ENCODE measurements at regions of chr14 and their contacts with region 1.

Region 1: GRCh38 chr14:20697273-20698017 is 8.9 kb downstream of the ANG start:
- DNase-seq: peak; percentile 67 to 79
- ATAC-seq: peak; percentile 95 to 96
- H3K4me3 ChIP-seq: no peak overlapping the region
- H3K27ac ChIP-seq: no peak overlapping the region
- H3K4me1 ChIP-seq: 0 out of 3 replicates have a peak, but pooled peaks cover 3% of the 10 kb centered on the region
- CTCF ChIP-seq: peak; percentile 83
- EP300 ChIP-seq: no peak
- POLR2A ChIP-seq: no peak
- RAD21 ChIP-seq: peak; percentile 88 to 93

Region 2: DNA sequence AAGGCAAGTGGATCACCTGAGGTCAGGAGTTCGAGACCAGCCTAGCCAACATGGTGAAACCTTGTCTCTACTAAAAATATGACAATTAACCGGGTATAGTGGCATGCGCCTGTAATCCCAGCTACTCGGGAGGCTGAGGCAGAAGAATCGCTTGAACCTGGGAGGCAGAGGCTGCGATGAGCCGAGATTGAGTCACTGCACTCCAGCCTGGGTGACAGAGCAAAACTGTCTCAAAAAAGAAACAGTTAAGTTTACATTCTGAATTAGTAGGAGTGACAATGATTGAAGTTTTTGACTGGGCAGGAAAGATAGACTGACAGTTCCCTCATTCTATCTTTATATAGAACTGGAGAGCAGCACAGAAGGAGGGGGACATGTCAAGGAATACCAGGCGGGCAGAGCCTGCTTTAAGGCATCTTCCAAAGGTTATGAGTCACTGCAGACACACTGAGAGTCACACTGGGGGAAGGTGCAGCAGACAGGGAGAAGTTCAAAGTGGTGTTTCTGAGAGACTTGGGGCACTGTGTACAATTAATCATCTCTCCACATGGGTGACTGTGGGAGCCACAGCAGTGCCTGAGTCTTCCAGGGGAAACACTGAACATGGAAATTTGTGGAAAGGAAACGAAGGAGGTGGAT is 151.0 kb after region 1 on chr14:
- CTCF ChIA-PET with region 1: interaction called, 81 read pairs
- POLR2A ChIA-PET with region 1: interaction called, 3 read pairs
- DNase-seq: peak; percentile 84 to 94
- ATAC-seq: peak; percentile 97 to 99
- H3K4me3 ChIP-seq: peak overlapping the region; percentile 31; the same call in 2 of the 3 replicates
- H3K27ac ChIP-seq: peak overlapping the region; percentile 94 to 96
- H3K4me1 ChIP-seq: peaks cover 40% of the 10 kb centered on the region
- CTCF ChIP-seq: no peak
- EP300 ChIP-seq: peak; percentile 33 to 39; a peak in 1 of 5 replicates
- POLR2A ChIP-seq: no peak
- RAD21 ChIP-seq: 0 out of 5 replicates have a peak, but pooled peaks of 1 of the 2 experiments have one; percentile 7

Region 3: GRCh38 chr14:20873370-20874177 is 176.1 kb after region 1 on chr14:
- CTCF ChIA-PET with region 1: interaction called, 36 read pairs
- POLR2A ChIA-PET with region 1: no interaction called
- DNase-seq: peak; percentile 33 to 87
- ATAC-seq: peak; percentile 96 to 99
- H3K4me3 ChIP-seq: no peak overlapping the region
- H3K27ac ChIP-seq: 0 out of 6 replicates have a peak overlapping the region, but pooled peaks of 1 of the 2 experiments have one; percentile 25
- H3K4me1 ChIP-seq: no peaks in the 10 kb centered on the region
- CTCF ChIP-seq: peak; percentile 76
- EP300 ChIP-seq: no peak
- POLR2A ChIP-seq: no peak
- RAD21 ChIP-seq: peak; percentile 79 to 87